PC-9 (cell line): ENCODE measurements at regions of chr16 and their contacts with region 1.

Region 1: DNA sequence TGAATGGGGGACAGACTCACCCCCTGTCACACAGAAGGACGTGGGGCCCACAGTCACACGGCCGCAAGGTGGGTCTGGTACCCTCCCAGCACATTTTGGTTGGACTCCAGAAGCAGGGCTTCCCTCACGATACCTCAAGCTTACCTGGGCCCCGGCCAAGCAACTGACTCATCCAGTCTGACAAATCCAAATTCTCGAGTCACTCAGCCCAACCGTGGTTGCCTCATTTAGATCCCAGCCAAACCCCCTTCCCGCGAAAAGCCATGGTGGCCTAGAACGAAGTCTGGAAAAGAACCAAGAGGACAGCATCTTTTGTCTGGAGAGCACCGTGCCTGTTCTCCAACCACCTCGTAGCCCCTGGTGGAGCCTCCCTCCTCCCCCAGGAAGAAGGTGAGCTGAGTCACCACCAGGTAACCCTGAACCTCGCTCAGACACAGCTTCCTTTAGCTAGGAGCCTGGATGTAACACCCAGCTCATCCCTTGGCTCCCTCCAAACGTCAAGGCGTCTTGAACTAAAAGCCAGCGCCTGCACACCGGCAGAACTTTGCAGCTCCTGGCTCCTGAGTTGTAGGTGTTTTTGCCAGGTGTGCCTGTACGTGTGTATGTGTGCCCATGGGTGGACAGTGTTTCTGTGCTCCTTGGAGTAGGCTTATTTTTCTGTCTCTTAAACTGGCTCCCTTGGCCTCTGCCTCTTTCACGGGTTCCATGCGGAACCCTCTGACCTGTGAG is 78.9 kb downstream of the CMIP start:
- DNase-seq: peak; percentile 91 to 92
- H3K4me3 ChIP-seq: 0 out of 2 replicates have a peak overlapping the region, but pooled peaks have one; percentile 1
- H3K27ac ChIP-seq: peak overlapping the region; percentile 73
- H3K4me1 ChIP-seq: peaks cover 71% of the 10 kb centered on the region
- H3K27me3 ChIP-seq: no peaks in the 10 kb centered on the region
- CTCF ChIP-seq: no peak

Region 2: GRCh38 chr16:81394966-81395651 is 128.4 kb before region 1 on chr16:
- CTCF ChIA-PET with region 1: no interaction called
- POLR2A ChIA-PET with region 1: no interaction called
- intact Hi-C with region 1: no loop called
- DNase-seq: no peak
- H3K4me3 ChIP-seq: no peak overlapping the region
- H3K27ac ChIP-seq: no peak overlapping the region
- H3K4me1 ChIP-seq: no peaks in the 10 kb centered on the region
- H3K27me3 ChIP-seq: no peaks in the 10 kb centered on the region
- CTCF ChIP-seq: no peak

Region 3: GRCh38 chr16:81493755-81494433 is 29.7 kb before region 1 on chr16:
- CTCF ChIA-PET with region 1: interaction called, 3 read pairs
- POLR2A ChIA-PET with region 1: no interaction called
- intact Hi-C with region 1: loop called (anchors 1 kb)
- DNase-seq: peak; percentile 92 to 96
- H3K4me3 ChIP-seq: peak overlapping the region; percentile 28; the same call in 1 of the 2 replicates
- H3K27ac ChIP-seq: peak overlapping the region; percentile 91
- H3K4me1 ChIP-seq: peaks cover 42% of the 10 kb centered on the region
- H3K27me3 ChIP-seq: no peaks in the 10 kb centered on the region
- CTCF ChIP-seq: no peak

Region 4: DNA sequence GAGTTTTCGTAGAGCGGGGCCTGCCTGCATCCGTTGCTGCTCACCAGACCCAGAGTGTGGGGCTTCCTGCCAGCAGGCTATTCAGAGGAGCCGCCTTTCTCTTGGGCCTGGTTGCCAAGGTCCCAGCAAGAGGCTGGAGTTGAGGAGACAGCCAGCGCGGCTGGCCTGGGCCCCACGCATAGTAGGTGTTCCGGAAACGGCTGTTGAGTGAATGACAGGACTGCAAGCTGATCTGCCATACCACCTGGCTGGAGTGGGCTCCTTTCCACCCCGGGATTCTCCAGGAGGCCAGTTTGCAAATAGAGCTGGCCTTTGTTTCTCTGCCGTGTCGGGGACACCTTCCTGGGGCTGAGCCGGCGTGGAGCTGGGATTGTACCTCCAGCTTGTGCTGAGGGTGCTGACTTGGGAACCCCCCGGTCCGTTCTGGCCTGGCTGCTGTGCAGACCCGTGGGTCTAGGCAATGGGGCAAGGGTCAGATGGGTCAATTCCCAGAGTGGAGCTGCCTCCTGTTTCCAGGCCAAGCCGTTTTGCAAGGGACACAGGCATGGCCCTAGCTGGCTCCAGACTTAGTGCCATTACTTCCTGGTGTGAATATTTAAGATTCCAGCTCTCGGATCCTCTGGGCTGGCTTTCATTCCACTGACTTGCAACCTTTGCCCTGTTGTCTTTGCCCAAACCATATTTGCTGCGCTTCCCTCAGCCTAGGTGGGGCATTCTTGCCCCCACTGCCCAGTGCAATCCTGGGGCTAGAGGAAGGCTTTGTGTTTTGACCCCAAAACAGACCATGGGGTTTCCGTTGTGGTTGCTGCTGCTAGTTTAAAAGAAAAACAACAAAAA is 10.1 kb before region 1 on chr16:
- CTCF ChIA-PET with region 1: no interaction called
- POLR2A ChIA-PET with region 1: interaction called, 6 read pairs
- intact Hi-C with region 1: loop called (anchors 2 kb)
- DNase-seq: peak; percentile 61 to 89
- H3K4me3 ChIP-seq: no peak overlapping the region
- H3K27ac ChIP-seq: peak overlapping the region; percentile 82
- H3K4me1 ChIP-seq: peaks cover 67% of the 10 kb centered on the region
- H3K27me3 ChIP-seq: no peaks in the 10 kb centered on the region
- CTCF ChIP-seq: no peak

Region 5: GRCh38 chr16:81585785-81586184 is 62.2 kb after region 1 on chr16:
- CTCF ChIA-PET with region 1: no interaction called
- POLR2A ChIA-PET with region 1: no interaction called
- intact Hi-C with region 1: loop called (anchors 1 kb)
- DNase-seq: peak in 1 of 2 experiments; percentile 32
- H3K4me3 ChIP-seq: no peak overlapping the region
- H3K27ac ChIP-seq: peak overlapping the region; percentile 68
- H3K4me1 ChIP-seq: peaks cover 62% of the 10 kb centered on the region
- H3K27me3 ChIP-seq: no peaks in the 10 kb centered on the region
- CTCF ChIP-seq: peak; percentile 52

Region 6: DNA sequence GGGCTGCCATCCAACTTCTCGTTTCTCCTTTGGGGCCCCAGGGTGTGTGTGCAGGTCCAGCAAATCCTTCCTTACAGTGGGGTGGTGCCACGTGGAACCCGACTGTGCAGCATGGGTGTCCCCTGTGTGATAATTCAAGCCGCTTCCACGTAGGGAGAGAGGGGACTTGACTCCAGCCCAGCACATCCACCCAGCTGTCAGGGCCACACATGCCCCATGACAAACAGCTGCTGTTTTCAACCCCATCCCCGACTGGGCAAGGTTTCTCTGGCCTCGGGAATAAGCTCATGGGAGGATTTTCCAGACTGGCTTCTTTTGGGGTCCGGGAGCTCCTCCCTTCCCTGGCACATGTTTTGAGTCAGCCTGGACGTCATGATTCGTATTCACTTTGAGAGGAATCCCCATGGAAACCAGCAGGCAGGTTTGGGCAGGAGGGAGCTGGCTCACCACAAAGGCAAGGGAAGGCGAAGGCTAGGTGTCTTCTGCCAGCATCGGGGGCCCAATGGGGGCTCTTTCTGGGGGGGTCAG is 77.4 kb after region 1 on chr16:
- CTCF ChIA-PET with region 1: interaction called, 3 read pairs
- POLR2A ChIA-PET with region 1: no interaction called
- intact Hi-C with region 1: loop called (anchors 2 kb)
- DNase-seq: peak in 1 of 2 experiments; percentile 53
- H3K4me3 ChIP-seq: no peak overlapping the region
- H3K27ac ChIP-seq: no peak overlapping the region
- H3K4me1 ChIP-seq: peaks cover 17% of the 10 kb centered on the region
- H3K27me3 ChIP-seq: no peaks in the 10 kb centered on the region
- CTCF ChIP-seq: no peak